ENCODE measurements at regions of chr11 and their contacts with region 1.

Region 1: GRCh38 chr11:9314291-9315036 is at the start of gene TMEM41B:
- DNase-seq: peak; percentile 97 to 99
- H3K4me3 ChIP-seq: peak within 1 kb of the TSS; percentile 97
- H3K27ac ChIP-seq: peak within 1 kb of the TSS; percentile 80 to 84
- H3K4me1 ChIP-seq: peaks cover 0 to 22% (median 17%) of the 10 kb centered on the region in 4 donors
- H3K27me3 ChIP-seq: peaks cover 0 to 8% of the 10 kb centered on the region in 2 donors
- CTCF ChIP-seq: no peak

Region 2: DNA sequence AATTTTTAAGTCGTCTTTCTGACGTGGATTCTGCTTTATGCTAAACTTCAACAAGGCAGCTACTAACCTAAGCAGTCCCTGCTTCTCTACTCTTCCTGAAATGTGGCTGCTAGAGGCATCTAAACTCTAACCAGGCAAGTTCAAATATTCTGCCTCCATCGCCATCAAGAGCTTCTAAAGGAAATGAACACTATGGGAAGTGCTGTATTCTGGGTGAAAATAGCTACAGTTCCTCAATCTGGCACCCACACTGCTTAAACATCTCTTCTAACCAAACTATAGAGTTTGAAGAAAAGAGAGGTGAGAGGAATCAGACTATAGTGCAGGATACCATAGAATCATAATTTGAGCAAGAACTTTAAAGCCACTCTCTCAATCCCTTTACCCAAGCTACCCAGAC is 317.0 kb before region 1 on chr11:
- intact Hi-C with region 1: no loop called
- DNase-seq: no peak
- H3K4me3 ChIP-seq: no peak overlapping the region
- H3K27ac ChIP-seq: no peak overlapping the region
- H3K4me1 ChIP-seq: no peaks in the 10 kb centered on the region
- H3K27me3 ChIP-seq: no peaks in the 10 kb centered on the region
- CTCF ChIP-seq: no peak

Region 3: GRCh38 chr11:9363954-9364912 is 49.8 kb after region 1 on chr11:
- intact Hi-C with region 1: loop called (anchors 5 kb)
- DNase-seq: peak; percentile 96 to 98
- H3K4me3 ChIP-seq: peak overlapping the region; percentile 51 to 52
- H3K27ac ChIP-seq: peak overlapping the region; percentile 94 to 95
- H3K4me1 ChIP-seq: peaks cover 0 to 18% (median 12%) of the 10 kb centered on the region in 4 donors
- H3K27me3 ChIP-seq: no peaks in the 10 kb centered on the region
- CTCF ChIP-seq: no peak

Region 4: GRCh38 chr11:9527481-9528140 is 213.1 kb after region 1 on chr11:
- intact Hi-C with region 1: no loop called
- DNase-seq: peak in 1 of 2 donors; percentile 33
- H3K4me3 ChIP-seq: no peak overlapping the region
- H3K27ac ChIP-seq: peak overlapping the region; percentile 47 to 59
- H3K4me1 ChIP-seq: peaks cover 0 to 62% (median 34%) of the 10 kb centered on the region in 4 donors
- H3K27me3 ChIP-seq: no peaks in the 10 kb centered on the region
- CTCF ChIP-seq: no peak

Region 5: DNA sequence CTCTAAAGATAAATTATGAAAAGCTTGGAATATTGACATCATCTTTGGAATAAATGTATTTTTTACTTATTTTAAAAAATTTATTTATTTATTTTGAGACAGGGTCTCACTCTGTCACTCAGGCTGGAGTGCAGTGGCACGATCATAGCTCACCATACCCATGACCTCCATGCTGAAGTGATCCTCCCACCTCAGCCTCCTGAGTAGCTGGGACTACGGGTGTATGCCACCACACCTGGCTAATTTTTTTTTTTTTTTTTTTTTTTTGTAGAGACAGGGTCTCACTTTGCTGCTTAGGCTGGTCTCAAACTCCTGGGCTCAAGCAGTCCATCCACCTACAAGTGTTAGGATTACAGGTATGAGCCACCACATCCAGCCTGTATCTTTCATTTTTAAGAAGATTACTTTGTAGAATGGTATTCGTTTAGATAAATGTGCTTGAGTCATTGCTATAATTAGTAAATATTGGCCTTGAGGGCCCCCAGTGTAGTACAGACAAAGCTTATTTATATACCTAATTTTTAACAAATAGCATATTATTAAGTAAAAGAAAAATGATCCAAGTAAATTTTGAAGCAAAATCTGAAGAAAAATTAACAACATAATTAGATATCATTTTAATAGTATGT is 357.9 kb after region 1 on chr11:
- intact Hi-C with region 1: no loop called
- DNase-seq: no peak
- H3K4me3 ChIP-seq: no peak overlapping the region
- H3K27ac ChIP-seq: no peak overlapping the region
- H3K4me1 ChIP-seq: peaks cover 0 to 59% (median 23%) of the 10 kb centered on the region in 4 donors
- H3K27me3 ChIP-seq: no peaks in the 10 kb centered on the region
- CTCF ChIP-seq: no peak